IMR-90 (cell line): ENCODE measurements at regions of chr10 and their contacts with region 1.

Region 1: GRCh38 chr10:103659674-103660363 is 166.3 kb downstream of the NEURL1 start:
- DNase-seq: peak; percentile 91
- ATAC-seq: peak; percentile 81
- H3K4me3 ChIP-seq: peak overlapping the region; percentile 63
- H3K27ac ChIP-seq: peak overlapping the region; percentile 95
- H3K4me1 ChIP-seq: peaks cover 10% of the 10 kb centered on the region
- H3K27me3 ChIP-seq: no peaks in the 10 kb centered on the region
- CTCF ChIP-seq: peak; percentile 26; the same call in 1 of the 2 replicates
- POLR2A ChIP-seq: 0 out of 2 replicates have a peak, but pooled peaks have one; percentile 23
- RAD21 ChIP-seq: no peak; the same call in 1 of the 2 replicates

Region 2: GRCh38 chr10:103265717-103266329 is 394.0 kb before region 1 on chr10:
- CTCF ChIA-PET with region 1: no interaction called
- POLR2A ChIA-PET with region 1: no interaction called
- dilution Hi-C with region 1: no loop called
- in situ Hi-C with region 1: no loop called
- intact Hi-C with region 1: no loop called
- DNase-seq: peak; percentile 82
- ATAC-seq: peak; percentile 95
- H3K4me3 ChIP-seq: no peak overlapping the region
- H3K27ac ChIP-seq: no peak overlapping the region
- H3K4me1 ChIP-seq: no peaks in the 10 kb centered on the region
- H3K27me3 ChIP-seq: peaks cover 2% of the 10 kb centered on the region; the same call in 1 of the 2 replicates
- CTCF ChIP-seq: no peak
- POLR2A ChIP-seq: no peak
- RAD21 ChIP-seq: no peak

Region 3: DNA sequence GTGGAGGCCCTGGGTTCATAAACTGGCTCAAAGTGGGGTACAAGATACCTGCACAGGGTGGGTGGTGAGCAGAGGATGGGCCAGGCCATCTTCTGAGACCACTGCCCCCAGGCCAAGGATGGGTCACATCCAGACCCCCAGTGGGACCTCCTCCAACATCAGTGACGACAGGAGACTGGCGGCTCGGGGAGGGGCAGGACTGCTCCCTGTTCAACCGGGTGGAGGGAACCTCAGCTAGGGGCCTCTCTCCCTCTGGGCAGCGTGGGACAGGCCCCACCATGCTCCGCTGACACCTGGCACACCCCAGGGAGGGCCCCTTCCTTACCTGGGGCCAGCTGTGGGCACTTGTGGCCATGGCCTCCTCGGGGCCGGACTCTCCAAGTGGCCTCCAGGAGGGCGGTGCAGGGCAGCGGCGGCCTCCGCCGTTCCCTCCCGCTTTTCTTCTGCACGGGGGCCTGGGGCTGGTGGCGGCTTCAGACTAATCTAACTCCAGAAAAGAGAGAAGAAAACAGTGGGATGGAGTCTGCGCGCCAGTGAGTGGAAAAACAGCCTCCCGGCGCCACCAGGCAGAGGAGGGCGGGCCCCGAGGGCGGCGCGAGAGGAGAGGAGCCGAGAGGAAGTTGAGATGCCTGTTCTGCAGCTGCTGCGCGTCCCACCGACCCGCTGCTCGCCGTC is 207.9 kb before region 1 on chr10 and contains the start of gene CALHM2:
- CTCF ChIA-PET with region 1: no interaction called
- POLR2A ChIA-PET with region 1: no interaction called
- dilution Hi-C with region 1: no loop called
- in situ Hi-C with region 1: no loop called
- intact Hi-C with region 1: no loop called
- DNase-seq: peak; percentile 41
- ATAC-seq: peak; percentile 81
- H3K4me3 ChIP-seq: peak within 1 kb of the TSS; percentile 49
- H3K27ac ChIP-seq: peak within 1 kb of the TSS; percentile 25; the same call in 1 of the 2 replicates
- H3K4me1 ChIP-seq: peaks cover 11% of the 10 kb centered on the region; the same call in 1 of the 2 replicates
- H3K27me3 ChIP-seq: no peaks in the 10 kb centered on the region
- CTCF ChIP-seq: no peak
- POLR2A ChIP-seq: no peak
- RAD21 ChIP-seq: no peak
- total RNA-seq, gene CALHM2: 2.2 and 2.5 TPM in 2 replicates

Region 4: DNA sequence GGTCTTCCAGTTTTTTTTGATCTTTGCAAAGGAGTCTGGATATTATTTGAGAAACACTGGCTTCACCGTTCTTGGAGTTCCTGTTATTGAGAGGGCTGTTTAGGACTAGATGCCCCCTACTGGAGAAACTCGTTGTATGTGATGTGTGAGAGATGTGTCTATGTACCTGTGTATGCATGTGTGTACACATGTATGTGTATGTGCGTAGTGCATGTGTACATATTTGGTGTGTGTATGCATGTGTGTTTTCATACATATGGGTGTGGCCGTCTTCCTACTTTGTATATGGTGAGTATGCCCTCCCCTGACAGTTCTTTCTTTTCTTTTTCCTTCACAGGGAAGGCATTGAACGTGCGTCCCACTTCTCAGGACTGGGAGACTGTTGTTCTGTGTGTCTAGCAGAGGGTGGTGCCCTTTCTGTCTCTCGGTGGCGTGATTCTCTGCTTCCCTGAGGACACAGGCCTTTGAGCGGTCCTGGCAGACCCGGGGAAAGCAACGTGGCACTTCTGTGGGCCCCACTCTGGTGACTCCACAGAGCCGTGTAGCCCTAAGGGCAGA is 177.8 kb before region 1 on chr10:
- CTCF ChIA-PET with region 1: no interaction called
- POLR2A ChIA-PET with region 1: no interaction called
- dilution Hi-C with region 1: no loop called
- in situ Hi-C with region 1: no loop called
- intact Hi-C with region 1: no loop called
- DNase-seq: peak; percentile 69
- ATAC-seq: peak; percentile 76
- H3K4me3 ChIP-seq: no peak overlapping the region
- H3K27ac ChIP-seq: no peak overlapping the region
- H3K4me1 ChIP-seq: no peaks in the 10 kb centered on the region; the same call in 1 of the 2 replicates
- H3K27me3 ChIP-seq: peaks cover 23% of the 10 kb centered on the region
- CTCF ChIP-seq: peak; percentile 59
- POLR2A ChIP-seq: no peak
- RAD21 ChIP-seq: peak; percentile 48

Region 5: GRCh38 chr10:103598654-103599115 is 61.1 kb before region 1 on chr10:
- CTCF ChIA-PET with region 1: interaction called, 3 read pairs
- POLR2A ChIA-PET with region 1: no interaction called
- dilution Hi-C with region 1: no loop called
- in situ Hi-C with region 1: no loop called
- intact Hi-C with region 1: loop called (anchors 2 kb)
- DNase-seq: peak; percentile 82
- ATAC-seq: peak; percentile 83
- H3K4me3 ChIP-seq: no peak overlapping the region
- H3K27ac ChIP-seq: no peak overlapping the region
- H3K4me1 ChIP-seq: no peaks in the 10 kb centered on the region; the same call in 1 of the 2 replicates
- H3K27me3 ChIP-seq: no peaks in the 10 kb centered on the region
- CTCF ChIP-seq: peak; percentile 88
- POLR2A ChIP-seq: 0 out of 2 replicates have a peak, but pooled peaks have one; percentile 29
- RAD21 ChIP-seq: peak; percentile 88

Region 6: DNA sequence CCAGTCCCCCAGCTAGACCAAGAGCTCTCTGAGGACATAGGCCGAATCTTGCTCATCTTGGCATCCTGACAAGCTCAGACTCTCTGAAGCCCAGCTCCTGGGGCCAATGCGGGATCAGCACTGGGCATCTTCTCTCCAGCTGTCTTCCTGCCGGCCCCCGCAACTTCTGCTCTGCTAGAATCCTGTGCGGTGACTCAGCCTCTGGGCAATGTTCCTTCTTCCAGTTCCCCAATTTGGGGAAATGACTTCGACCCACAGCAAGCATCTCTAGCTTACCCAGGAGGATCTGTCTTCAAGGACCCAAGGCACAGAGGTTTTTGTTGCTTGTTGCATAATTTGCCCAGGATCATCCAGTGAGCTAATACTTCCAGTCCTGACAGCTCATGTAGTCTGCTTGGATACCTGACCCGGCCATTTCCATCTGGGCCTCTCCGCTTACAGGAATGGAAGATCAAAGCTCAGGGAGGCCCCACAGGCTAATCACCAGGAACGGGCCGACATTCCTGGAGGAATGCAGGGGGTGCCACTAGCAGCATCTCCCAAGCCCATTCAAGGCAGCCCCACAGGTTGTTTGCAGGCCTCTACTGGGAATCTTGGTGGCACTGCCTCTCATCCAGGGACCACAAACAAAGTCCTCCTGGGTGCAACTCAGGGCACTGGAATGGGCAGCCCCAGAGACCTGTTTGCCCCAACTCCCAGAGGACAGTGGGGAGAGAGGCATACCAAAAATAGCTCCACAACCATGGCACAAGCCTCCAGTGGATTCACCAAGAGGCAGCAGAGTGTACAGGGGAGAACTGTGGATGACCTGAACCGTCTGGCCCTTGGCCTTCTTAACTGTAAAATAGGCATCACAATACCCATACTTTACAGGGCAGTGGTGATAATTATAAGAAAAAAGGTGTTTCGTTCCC is 14.4 kb before region 1 on chr10:
- CTCF ChIA-PET with region 1: no interaction called
- POLR2A ChIA-PET with region 1: interaction called, 3 read pairs
- dilution Hi-C with region 1: no loop called
- in situ Hi-C with region 1: no loop called
- intact Hi-C with region 1: loop called (anchors 2 kb)
- DNase-seq: peak; percentile 99
- ATAC-seq: peak; percentile 86
- H3K4me3 ChIP-seq: no peak overlapping the region
- H3K27ac ChIP-seq: peak overlapping the region; percentile 59
- H3K4me1 ChIP-seq: peaks cover 33% of the 10 kb centered on the region
- H3K27me3 ChIP-seq: no peaks in the 10 kb centered on the region
- CTCF ChIP-seq: no peak
- POLR2A ChIP-seq: peak; percentile 55; the same call in 1 of the 2 replicates
- RAD21 ChIP-seq: no peak

Region 7: DNA sequence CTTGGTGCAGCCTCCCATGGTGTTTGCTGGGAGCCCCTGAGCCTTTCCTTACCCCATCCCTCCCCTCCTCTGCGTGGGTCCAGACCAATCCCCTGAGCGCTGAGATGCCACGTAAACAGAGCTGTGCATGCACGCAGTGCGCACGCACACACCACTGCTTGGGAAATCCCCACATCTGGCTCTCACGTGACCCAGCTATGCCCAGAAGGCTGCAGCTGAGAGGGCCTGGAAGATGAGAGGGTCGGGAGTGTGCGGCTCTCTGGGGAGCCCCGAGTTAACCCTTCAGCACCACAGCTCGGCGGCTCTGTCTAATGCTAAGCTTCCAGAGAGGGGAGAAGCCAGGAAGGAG is 18.3 kb after region 1 on chr10:
- CTCF ChIA-PET with region 1: interaction called, 3 read pairs
- POLR2A ChIA-PET with region 1: interaction called, 5 read pairs
- dilution Hi-C with region 1: no loop called
- in situ Hi-C with region 1: no loop called
- intact Hi-C with region 1: loop called (anchors 1 kb)
- DNase-seq: peak; percentile 100
- ATAC-seq: peak; percentile 90
- H3K4me3 ChIP-seq: peak overlapping the region; percentile 46
- H3K27ac ChIP-seq: peak overlapping the region; percentile 91
- H3K4me1 ChIP-seq: peaks cover 22% of the 10 kb centered on the region
- H3K27me3 ChIP-seq: no peaks in the 10 kb centered on the region
- CTCF ChIP-seq: no peak
- POLR2A ChIP-seq: no peak
- RAD21 ChIP-seq: peak; percentile 7; the same call in 1 of the 2 replicates

Region 8: DNA sequence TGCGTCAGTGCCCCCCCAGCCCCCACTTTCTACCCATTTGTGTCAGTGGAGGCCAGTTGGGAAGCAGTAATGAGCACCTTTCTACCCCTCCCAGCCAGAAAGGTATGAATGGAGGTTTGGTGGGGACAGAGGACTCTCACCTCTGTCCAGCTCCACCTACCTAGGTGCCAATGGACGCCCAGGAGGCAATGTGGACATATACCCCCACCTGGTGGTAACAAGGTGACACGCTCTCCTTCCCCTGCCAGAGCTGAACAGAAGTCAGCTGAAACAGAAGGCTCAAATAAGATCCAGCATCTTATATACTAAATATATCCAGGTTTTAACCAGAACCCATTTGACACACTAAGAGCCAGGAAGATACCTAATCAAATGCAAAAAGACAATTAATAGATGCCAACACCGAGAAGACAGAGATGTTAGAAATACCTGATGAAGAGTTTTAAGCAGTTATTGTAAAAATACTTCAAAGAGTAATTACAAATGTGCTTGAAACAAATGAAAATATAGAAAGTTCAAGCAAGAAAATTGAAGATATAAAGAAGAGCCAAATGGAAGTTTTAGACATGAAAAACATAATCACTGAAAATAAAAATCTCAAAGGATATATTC is 962.9 kb after region 1 on chr10:
- CTCF ChIA-PET with region 1: no interaction called
- POLR2A ChIA-PET with region 1: no interaction called
- dilution Hi-C with region 1: no loop called
- in situ Hi-C with region 1: no loop called
- intact Hi-C with region 1: no loop called
- DNase-seq: no peak
- ATAC-seq: no peak
- H3K4me3 ChIP-seq: no peak overlapping the region
- H3K27ac ChIP-seq: no peak overlapping the region
- H3K4me1 ChIP-seq: no peaks in the 10 kb centered on the region
- H3K27me3 ChIP-seq: no peaks in the 10 kb centered on the region
- CTCF ChIP-seq: no peak; the same call in 1 of the 2 replicates
- POLR2A ChIP-seq: no peak
- RAD21 ChIP-seq: peak; percentile 34